Activated B cell treated with CpG ODN at 0.5 μM for 24 hours (primary cell): ENCODE measurements at regions of chr7 and their contacts with region 1.

Region 1: DNA sequence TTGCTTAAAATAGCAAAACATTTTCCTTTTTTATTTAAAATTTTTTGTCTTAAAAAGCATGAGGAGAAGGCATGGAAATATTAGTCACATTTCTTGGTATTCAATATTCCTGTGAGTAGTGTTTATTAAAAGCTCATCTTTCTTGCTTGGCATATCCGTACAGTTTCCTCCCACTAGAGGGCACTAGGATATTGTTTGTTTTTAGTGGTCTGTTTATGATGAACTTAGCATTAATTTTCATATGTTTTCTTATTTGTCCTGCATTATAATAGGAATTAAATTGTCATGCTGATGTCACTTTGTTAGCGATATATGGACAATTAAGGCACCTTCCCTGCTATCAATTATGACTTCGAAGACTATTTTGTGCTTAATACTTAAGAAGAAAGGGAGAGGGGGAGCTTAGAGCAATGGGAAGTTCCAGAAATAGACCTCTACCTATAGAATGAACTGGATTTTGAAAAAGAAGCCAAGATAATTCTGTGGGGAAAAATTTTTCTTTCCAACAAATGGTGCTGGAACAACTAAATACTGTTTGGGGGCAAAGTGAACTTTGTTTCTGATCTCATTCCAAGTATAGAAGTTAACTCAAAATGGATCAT is 91.0 kb upstream of the STRIP2 start:
- DNase-seq: no peak
- ATAC-seq: no peak
- H3K4me3 Mint-ChIP-seq: no peak overlapping the region
- H3K27ac Mint-ChIP-seq: no peak overlapping the region
- H3K4me1 Mint-ChIP-seq: peaks cover 6% of the 10 kb centered on the region
- H3K27me3 Mint-ChIP-seq: no peaks in the 10 kb centered on the region
- CTCF ChIP-seq: peak; percentile 46

Region 2: DNA sequence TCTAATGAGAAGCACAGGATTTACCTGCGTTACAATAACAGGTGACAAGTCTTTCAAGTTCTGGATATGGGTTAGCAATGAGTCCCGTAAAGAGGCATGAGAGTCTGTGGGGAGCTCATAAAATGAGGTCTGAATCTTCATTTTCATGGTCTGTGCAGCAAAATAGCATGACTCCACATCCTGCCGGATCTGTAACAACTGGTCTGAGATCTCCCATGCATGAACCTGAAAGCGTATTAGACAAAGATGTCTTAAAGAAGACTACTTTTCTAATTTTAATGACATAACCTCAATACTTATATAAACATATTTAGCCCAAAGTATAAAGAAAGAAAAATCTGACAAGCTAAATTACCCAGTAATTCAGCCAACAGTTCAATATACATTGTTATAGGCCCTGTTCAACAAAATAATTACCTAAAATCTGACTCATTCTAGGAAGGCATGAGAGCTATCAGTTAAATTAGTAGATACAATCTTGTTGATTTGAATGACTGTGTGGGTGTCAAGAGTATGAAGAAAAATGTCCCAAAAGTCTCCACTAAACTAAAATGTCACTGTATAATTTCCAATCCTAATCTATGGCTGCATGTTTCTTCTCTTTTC is 325.2 kb before region 1 on chr7:
- CTCF ChIA-PET with region 1: no interaction called
- POLR2A ChIA-PET with region 1: no interaction called
- intact Hi-C with region 1: no loop called
- DNase-seq: no peak
- ATAC-seq: peak; percentile 87
- H3K4me3 Mint-ChIP-seq: peak overlapping the region; percentile 26
- H3K27ac Mint-ChIP-seq: peak overlapping the region; percentile 76
- H3K4me1 Mint-ChIP-seq: peaks cover 43% of the 10 kb centered on the region
- H3K27me3 Mint-ChIP-seq: no peaks in the 10 kb centered on the region
- CTCF ChIP-seq: no peak

Region 3: GRCh38 chr7:129247087-129247486 is 96.1 kb before region 1 on chr7:
- CTCF ChIA-PET with region 1: no interaction called
- POLR2A ChIA-PET with region 1: no interaction called
- intact Hi-C with region 1: no loop called
- DNase-seq: no peak
- ATAC-seq: no peak
- H3K4me3 Mint-ChIP-seq: no peak overlapping the region
- H3K27ac Mint-ChIP-seq: no peak overlapping the region
- H3K4me1 Mint-ChIP-seq: peaks cover 5% of the 10 kb centered on the region
- H3K27me3 Mint-ChIP-seq: no peaks in the 10 kb centered on the region
- CTCF ChIP-seq: no peak

Region 4: GRCh38 chr7:129376076-129376777 is 33.0 kb after region 1 on chr7:
- CTCF ChIA-PET with region 1: interaction called, 9 read pairs
- POLR2A ChIA-PET with region 1: no interaction called
- intact Hi-C with region 1: loop called (anchors 5 kb)
- DNase-seq: no peak
- ATAC-seq: peak; percentile 70
- H3K4me3 Mint-ChIP-seq: no peak overlapping the region
- H3K27ac Mint-ChIP-seq: no peak overlapping the region
- H3K4me1 Mint-ChIP-seq: peaks cover 6% of the 10 kb centered on the region
- H3K27me3 Mint-ChIP-seq: no peaks in the 10 kb centered on the region
- CTCF ChIP-seq: no peak

Region 5: GRCh38 chr7:129644634-129645230 is 301.5 kb after region 1 on chr7:
- CTCF ChIA-PET with region 1: no interaction called
- POLR2A ChIA-PET with region 1: no interaction called
- intact Hi-C with region 1: loop called (anchors 1 kb)
- DNase-seq: no peak
- ATAC-seq: no peak
- H3K4me3 Mint-ChIP-seq: no peak overlapping the region
- H3K27ac Mint-ChIP-seq: no peak overlapping the region
- H3K4me1 Mint-ChIP-seq: peaks cover 3% of the 10 kb centered on the region
- H3K27me3 Mint-ChIP-seq: no peaks in the 10 kb centered on the region
- CTCF ChIP-seq: no peak

Region 6: DNA sequence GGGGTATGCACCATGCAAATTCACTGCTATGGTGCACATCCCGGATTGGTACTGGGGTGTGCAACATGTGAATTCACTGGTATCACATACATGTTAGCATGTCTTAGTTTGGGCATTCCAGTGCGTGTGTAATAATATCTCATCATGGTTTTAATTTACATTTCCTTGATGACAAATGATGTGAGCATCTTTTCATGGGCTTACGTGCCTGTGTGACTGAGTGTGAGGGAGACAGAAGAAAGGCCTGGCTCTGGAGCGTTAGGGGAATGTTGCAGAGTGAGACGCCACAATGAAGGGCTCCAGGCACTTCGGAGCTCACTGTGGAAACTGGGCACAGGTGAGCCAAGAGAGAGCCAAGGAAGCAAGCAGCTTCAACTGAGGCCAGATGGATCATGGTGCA is 446.9 kb after region 1 on chr7:
- CTCF ChIA-PET with region 1: no interaction called
- POLR2A ChIA-PET with region 1: no interaction called
- intact Hi-C with region 1: no loop called
- DNase-seq: no peak
- ATAC-seq: no peak
- H3K4me3 Mint-ChIP-seq: no peak overlapping the region
- H3K27ac Mint-ChIP-seq: no peak overlapping the region
- H3K4me1 Mint-ChIP-seq: peaks cover 11% of the 10 kb centered on the region
- H3K27me3 Mint-ChIP-seq: peaks cover 34% of the 10 kb centered on the region
- CTCF ChIP-seq: no peak